Mammary epithelial cell (primary cell): ENCODE measurements at regions of chr3 and their contacts with region 1.

Region 1: DNA sequence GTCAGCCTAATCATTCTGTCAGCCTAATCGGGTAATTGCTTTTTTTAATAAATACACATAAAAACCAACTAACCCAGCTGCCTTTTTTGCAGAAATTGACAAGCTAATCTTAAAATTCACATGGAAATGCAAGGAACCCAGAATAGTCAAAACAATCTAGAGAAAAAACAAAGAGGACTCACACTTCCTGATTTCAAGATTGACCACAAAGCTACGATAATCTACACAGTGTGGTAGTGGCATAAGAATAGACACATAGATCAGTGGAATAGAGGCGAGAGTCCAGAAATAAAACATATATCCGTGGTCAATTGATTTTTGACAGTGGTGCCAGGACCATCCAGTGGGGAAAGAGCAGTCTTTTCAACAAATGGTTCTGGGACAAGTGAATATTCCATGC is 2.4 kb upstream of the C3orf20 start:
- DNase-seq: no peak
- H3K4me3 ChIP-seq: no peak overlapping the region
- H3K27ac ChIP-seq: no peak overlapping the region
- H3K4me1 ChIP-seq: no peaks in the 10 kb centered on the region
- H3K27me3 ChIP-seq: no peaks in the 10 kb centered on the region
- CTCF ChIP-seq: no peak

Region 2: DNA sequence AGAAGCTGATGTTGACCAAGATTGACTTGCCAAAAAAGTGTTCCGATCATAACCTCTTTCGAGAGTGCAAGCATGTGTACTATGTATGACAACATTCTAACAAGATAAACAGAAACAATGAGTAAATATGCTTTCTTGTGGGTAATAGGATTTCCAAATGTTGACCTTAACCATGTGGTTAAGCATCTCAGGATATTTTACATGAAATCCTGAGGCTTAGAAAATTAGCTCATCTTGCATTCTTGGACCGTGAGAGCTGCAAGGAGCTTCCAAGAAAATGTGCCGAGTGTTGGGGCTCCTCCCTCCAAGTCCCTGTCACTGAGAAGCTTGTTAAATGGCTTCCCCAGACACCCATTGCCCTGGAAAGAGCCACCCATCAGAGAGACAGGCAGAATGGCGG is 52.4 kb after region 1 on chr3:
- CTCF ChIA-PET with region 1: no interaction called
- dilution Hi-C with region 1: no loop called
- in situ Hi-C with region 1: no loop called
- intact Hi-C with region 1: no loop called
- DNase-seq: no peak
- H3K4me3 ChIP-seq: no peak overlapping the region
- H3K27ac ChIP-seq: no peak overlapping the region
- H3K4me1 ChIP-seq: no peaks in the 10 kb centered on the region
- H3K27me3 ChIP-seq: no peaks in the 10 kb centered on the region
- CTCF ChIP-seq: no peak

Region 3: DNA sequence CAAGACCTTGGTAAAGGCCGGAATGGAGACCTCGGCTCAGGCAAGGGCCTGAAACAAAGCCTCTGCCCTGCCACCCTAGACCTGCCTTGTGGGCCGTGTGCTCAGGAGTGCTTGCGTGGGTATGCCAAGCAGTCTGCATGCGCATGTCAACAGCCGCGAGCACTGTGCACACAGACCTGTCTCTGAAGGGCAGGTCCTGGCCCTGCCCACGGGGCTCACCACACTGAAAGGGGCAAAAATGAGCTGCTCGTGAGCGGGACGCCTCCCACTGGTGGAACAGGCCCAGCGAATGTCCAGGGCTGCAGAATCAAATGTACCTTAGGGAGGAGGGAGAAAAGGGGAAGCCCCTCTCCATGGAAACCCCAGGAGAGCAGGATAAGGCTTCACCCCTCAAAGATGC is 101.8 kb after region 1 on chr3:
- CTCF ChIA-PET with region 1: no interaction called
- dilution Hi-C with region 1: loop called (anchors 5 kb)
- in situ Hi-C with region 1: no loop called
- intact Hi-C with region 1: no loop called
- DNase-seq: no peak
- H3K4me3 ChIP-seq: no peak overlapping the region
- H3K27ac ChIP-seq: no peak overlapping the region
- H3K4me1 ChIP-seq: no peaks in the 10 kb centered on the region
- H3K27me3 ChIP-seq: no peaks in the 10 kb centered on the region
- CTCF ChIP-seq: no peak